Activated CD4-positive, alpha-beta T cell treated with anti-CD3 and anti-CD28 coated beads, Interleukin-2, amount 10 ng/mL, durations not matched to agents 7 days and 5 days (primary cell): ENCODE measurements at regions of chr17 and their contacts with region 1.

Region 1: GRCh38 chr17:39777534-39778365 is 40.0 kb downstream of the GRB7 start:
- DNase-seq: no peak
- H3K4me3 Mint-ChIP-seq: peak overlapping the region; percentile 82
- H3K27ac Mint-ChIP-seq: peak overlapping the region; percentile 90
- H3K4me1 Mint-ChIP-seq: peaks cover 84% of the 10 kb centered on the region
- H3K27me3 Mint-ChIP-seq: no peaks in the 10 kb centered on the region

Region 2: GRCh38 chr17:39668199-39668966 is 109.4 kb before region 1 on chr17 and contains the start of gene PNMT:
- CTCF ChIA-PET with region 1: no interaction called
- POLR2A ChIA-PET with region 1: no interaction called
- DNase-seq: peak; percentile 72
- H3K4me3 Mint-ChIP-seq: no peak within 1 kb of the TSS
- H3K27ac Mint-ChIP-seq: peak within 1 kb of the TSS; percentile 81
- H3K4me1 Mint-ChIP-seq: peaks cover 6% of the 10 kb centered on the region
- H3K27me3 Mint-ChIP-seq: peaks cover 28% of the 10 kb centered on the region
- total RNA-seq, gene PNMT: 0.19 TPM in 1 of 2 experiments, not detected in the other

Region 3: DNA sequence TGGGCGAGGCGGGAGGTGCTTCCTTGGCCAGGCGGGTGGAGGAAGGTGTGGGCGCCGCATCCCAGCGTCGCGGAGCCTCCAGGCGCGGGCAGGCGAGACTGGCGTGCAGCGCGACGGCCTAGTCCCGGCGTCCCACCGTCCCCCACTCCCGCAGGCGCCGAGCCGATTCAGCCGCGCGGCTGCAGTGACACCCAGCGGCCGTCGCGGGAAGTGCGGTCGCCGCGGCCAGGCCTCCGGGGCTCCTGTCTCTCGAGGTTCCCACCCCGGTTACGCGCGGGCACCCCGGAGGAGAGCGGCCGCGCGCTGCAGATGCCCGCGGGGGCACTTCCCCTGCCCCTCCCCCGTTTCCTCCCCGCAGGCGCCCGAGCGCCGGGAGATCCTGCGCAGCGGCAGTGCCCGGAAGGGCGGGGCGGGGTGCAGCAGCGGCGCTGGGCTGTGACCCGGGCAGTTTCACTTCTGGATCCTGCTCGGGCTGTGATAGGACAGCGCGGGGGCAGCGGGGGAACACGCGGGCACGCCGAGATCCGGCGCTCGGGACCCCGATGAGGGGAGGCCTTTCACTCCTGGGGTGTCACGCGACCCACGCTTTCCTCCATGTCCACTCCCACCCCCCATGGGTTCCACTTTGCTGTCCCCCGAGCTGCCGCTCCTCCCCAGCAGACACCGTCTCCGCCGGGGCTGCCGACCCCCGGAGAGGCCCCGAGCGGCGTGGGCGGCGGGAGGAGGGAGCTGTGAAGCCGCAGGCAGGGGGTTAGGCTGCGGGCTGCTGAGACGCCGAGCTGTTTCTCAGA is 23.4 kb before region 1 on chr17:
- CTCF ChIA-PET with region 1: interaction called, 10 read pairs
- POLR2A ChIA-PET with region 1: interaction called, 5 read pairs
- DNase-seq: peak; percentile 97
- H3K4me3 Mint-ChIP-seq: peak overlapping the region; percentile 75
- H3K27ac Mint-ChIP-seq: peak overlapping the region; percentile 94
- H3K4me1 Mint-ChIP-seq: peaks cover 60% of the 10 kb centered on the region
- H3K27me3 Mint-ChIP-seq: no peaks in the 10 kb centered on the region

Region 4: GRCh38 chr17:39794249-39794970 is 16.7 kb after region 1 on chr17:
- CTCF ChIA-PET with region 1: interaction called, 10 read pairs
- POLR2A ChIA-PET with region 1: no interaction called
- DNase-seq: peak; percentile 60
- H3K4me3 Mint-ChIP-seq: peak overlapping the region; percentile 24
- H3K27ac Mint-ChIP-seq: peak overlapping the region; percentile 85
- H3K4me1 Mint-ChIP-seq: peaks cover 77% of the 10 kb centered on the region
- H3K27me3 Mint-ChIP-seq: no peaks in the 10 kb centered on the region

Region 5: DNA sequence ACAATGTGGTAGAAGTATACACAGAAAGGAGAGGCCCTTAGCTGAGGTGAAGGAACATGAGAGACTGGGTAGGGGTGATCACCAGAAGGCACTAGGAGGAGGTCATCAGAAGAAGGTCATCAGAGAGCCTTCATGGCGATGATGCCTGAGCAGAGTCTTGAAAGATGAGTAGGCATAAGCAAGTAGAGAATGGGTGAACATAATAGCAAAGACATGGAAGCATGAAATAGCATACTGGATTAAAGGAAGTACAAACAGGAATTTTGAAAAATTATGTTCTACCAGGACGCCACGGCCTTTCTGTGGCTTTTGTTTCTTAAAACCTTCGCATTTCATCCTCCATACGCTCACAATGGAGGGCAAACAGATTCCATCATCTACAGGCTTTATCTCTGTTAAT is 83.5 kb after region 1 on chr17:
- CTCF ChIA-PET with region 1: no interaction called
- POLR2A ChIA-PET with region 1: no interaction called
- DNase-seq: no peak
- H3K4me3 Mint-ChIP-seq: peak overlapping the region; percentile 65
- H3K27ac Mint-ChIP-seq: peak overlapping the region; percentile 80
- H3K4me1 Mint-ChIP-seq: peaks cover 44% of the 10 kb centered on the region
- H3K27me3 Mint-ChIP-seq: no peaks in the 10 kb centered on the region